Mammary epithelial cell (primary cell): ENCODE measurements at regions of chr1 and their contacts with region 1.

Region 1: DNA sequence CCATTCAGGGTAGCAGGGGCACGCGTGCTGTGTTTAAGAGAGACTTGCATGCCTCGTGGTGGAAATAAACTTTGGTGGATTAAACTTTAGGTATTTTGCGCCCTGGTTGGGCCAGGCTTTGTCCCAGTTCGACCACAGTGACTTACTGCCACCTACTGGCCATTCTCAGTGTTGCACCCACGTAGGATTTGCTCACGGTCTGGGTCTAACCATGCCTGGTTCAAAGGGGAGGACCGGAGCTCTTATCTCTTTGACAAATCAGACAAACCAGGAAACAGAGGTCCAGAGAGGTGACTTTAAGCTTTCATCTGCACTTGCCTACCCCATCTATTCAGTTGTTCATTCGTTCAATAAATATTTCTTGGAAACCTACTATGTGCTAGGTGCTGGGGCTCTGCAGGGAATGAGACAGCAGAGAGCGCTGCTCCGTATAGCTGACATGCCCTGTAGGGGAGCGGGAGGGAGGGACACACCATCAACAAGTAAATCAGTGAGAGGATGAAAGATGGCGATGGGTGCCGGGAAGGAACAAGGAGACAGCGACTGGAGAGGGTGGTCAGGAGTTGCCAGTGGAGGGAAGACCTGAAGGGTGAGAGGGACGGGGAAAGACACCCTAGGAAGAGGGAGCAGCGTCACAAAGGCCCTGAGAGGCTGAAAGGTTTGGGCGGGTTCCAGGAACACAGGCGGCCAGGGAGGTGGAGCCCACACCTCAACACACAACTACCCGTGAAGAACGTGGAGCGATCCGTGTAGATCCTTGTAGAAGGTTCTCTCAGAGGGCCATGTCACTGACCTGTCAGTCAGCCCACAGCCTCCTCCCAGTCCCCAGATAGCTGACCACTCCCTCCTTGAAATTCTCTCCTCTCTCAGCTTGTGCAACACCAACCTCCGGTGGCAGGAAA is 27.2 kb upstream of the TINAGL1 start:
- DNase-seq: peak; percentile 89
- H3K4me3 ChIP-seq: peak overlapping the region; percentile 7 to 47 (median 30)
- H3K27ac ChIP-seq: peak overlapping the region; percentile 23
- H3K4me1 ChIP-seq: peaks cover 19% of the 10 kb centered on the region
- H3K27me3 ChIP-seq: no peaks in the 10 kb centered on the region
- CTCF ChIP-seq: peak; percentile 84

Region 2: DNA sequence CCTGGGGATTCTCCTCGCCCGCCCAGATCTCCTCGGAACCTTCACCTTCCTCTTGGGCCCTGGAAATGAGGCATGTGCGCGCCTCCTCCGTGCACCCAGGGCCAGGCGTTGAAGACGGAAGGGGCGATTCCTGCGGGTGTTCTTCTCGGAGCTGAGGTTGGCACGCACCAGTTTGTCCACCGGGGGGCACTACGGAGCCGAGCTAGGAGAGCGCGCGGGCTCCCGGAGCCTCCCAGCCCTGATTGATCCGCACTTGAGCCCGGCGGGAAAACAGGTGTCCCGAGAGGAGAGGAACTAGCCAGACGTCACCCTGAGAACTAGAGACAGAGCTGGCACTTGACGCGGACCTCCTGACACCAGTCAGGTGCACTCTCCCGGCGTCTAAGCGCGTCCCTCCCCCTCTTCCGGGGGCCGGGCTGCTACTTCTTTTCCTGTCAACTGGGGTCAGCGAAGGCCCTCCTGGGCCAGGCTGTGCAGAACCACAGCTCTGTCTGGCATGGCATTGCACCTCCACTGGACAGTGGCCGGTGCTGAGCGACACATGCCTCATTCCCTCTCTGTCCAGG is 154.4 kb before region 1 on chr1:
- CTCF ChIA-PET with region 1: interaction called, 18 read pairs
- dilution Hi-C with region 1: no loop called
- in situ Hi-C with region 1: loop called in 1 of 2 experiments (anchors 10 kb)
- intact Hi-C with region 1: loop called (anchors 1 kb)
- DNase-seq: peak; percentile 87
- H3K4me3 ChIP-seq: no peak overlapping the region
- H3K27ac ChIP-seq: no peak overlapping the region
- H3K4me1 ChIP-seq: peaks cover 42% of the 10 kb centered on the region
- H3K27me3 ChIP-seq: no peaks in the 10 kb centered on the region
- CTCF ChIP-seq: peak; percentile 83 to 95

Region 3: GRCh38 chr1:31422505-31423319 is 126.4 kb before region 1 on chr1:
- CTCF ChIA-PET with region 1: no interaction called
- dilution Hi-C with region 1: no loop called
- in situ Hi-C with region 1: no loop called
- intact Hi-C with region 1: loop called (anchors 1 kb)
- DNase-seq: peak; percentile 95
- H3K4me3 ChIP-seq: no peak overlapping the region
- H3K27ac ChIP-seq: peak overlapping the region; percentile 85
- H3K4me1 ChIP-seq: peaks cover 86% of the 10 kb centered on the region
- H3K27me3 ChIP-seq: no peaks in the 10 kb centered on the region
- CTCF ChIP-seq: peak; percentile 96 to 98

Region 4: DNA sequence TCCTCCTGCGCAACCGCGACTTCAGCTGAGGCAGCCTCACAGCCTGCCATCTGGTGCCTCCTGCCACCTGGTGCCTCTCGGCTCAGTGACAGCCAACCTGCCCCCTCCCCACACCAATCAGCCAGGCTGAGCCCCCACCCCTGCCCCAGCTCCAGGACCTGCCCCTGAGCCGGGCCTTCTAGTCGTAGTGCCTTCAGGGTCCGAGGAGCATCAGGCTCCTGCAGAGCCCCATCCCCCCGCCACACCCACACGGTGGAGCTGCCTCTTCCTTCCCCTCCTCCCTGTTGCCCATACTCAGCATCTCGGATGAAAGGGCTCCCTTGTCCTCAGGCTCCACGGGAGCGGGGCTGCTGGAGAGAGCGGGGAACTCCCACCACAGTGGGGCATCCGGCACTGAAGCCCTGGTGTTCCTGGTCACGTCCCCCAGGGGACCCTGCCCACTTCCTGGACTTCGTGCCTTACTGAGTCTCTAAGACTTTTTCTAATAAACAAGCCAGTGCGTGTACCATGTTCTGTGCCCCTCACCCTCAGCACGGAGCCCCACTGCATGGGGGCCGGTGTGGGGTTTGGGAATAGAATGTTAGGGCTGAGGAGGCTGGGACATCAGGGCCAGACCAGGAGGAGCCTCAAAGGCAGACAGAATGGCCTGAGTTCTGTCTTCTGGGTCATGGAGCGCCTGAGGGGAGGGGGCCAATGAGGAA is 114.8 kb before region 1 on chr1:
- CTCF ChIA-PET with region 1: no interaction called
- dilution Hi-C with region 1: no loop called
- in situ Hi-C with region 1: loop called in 1 of 2 experiments (anchors 10 kb)
- intact Hi-C with region 1: loop called (anchors 1 kb)
- DNase-seq: no peak
- H3K4me3 ChIP-seq: no peak overlapping the region
- H3K27ac ChIP-seq: no peak overlapping the region
- H3K4me1 ChIP-seq: peaks cover 30% of the 10 kb centered on the region
- H3K27me3 ChIP-seq: no peaks in the 10 kb centered on the region
- CTCF ChIP-seq: no peak

Region 5: DNA sequence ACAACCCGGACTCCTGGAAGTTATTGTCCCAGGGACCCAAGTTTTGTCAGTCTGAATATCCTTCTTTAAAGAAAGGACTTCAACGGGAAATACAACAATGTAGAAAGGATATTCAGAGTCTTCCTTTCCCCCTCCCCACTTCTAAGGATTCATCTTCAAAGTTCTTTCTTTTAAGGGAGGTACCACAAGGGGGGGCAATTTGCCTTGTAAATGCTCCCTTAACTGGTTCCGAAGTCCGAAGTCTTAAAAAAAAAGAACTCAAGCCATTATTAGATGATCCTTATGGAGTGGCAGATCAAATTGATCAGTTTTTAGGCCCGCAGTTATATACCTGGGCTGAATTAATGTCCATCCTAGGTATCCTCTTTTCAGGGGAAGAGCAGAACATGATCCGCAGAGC is 89.1 kb before region 1 on chr1:
- CTCF ChIA-PET with region 1: interaction called, 3 read pairs
- dilution Hi-C with region 1: no loop called
- in situ Hi-C with region 1: no loop called
- intact Hi-C with region 1: loop called (anchors 1 kb)
- DNase-seq: no peak
- H3K4me3 ChIP-seq: no peak overlapping the region
- H3K27ac ChIP-seq: no peak overlapping the region
- H3K4me1 ChIP-seq: no peaks in the 10 kb centered on the region
- H3K27me3 ChIP-seq: no peaks in the 10 kb centered on the region
- CTCF ChIP-seq: peak in 1 of 2 donors; percentile 20

Region 6: DNA sequence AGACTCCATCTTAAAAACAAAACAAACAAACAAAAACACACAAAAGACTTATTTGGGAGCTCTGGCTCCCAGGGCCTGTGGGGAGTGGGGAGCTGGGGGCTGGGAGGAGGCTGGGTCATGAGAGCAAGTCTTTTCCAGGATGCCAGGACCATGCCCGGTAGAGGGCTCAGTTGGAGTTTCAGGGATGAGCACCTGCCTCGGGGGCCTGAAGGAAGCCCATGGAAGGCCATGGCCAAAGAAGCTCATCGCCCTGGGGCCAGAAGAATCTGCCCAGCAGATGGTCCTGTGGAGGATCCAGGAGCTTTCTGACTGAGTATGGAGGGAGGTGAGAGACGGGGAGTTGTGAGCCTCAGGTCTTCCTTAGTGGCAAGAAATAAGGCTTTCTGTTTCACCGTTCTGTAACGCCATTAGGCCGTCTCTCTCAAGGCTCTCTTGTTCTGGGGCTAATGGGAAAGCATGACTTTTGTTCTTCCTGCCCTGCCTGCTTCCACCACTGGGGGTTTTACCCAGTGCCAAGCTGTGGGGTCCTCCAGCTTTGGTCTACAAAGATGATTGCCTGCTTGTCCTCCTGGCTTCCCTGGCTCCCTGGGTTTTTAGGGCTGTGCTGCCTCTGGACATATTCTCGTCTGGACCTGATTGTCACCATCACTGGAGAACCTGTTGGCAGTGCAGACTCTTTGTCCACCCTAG is 47.8 kb before region 1 on chr1:
- CTCF ChIA-PET with region 1: no interaction called
- dilution Hi-C with region 1: loop called (anchors 5 kb)
- in situ Hi-C with region 1: no loop called
- intact Hi-C with region 1: no loop called
- DNase-seq: no peak
- H3K4me3 ChIP-seq: no peak overlapping the region
- H3K27ac ChIP-seq: no peak overlapping the region
- H3K4me1 ChIP-seq: peaks cover 4% of the 10 kb centered on the region
- H3K27me3 ChIP-seq: peaks cover 3% of the 10 kb centered on the region
- CTCF ChIP-seq: peak in 1 of 2 donors; percentile 14

Region 7: DNA sequence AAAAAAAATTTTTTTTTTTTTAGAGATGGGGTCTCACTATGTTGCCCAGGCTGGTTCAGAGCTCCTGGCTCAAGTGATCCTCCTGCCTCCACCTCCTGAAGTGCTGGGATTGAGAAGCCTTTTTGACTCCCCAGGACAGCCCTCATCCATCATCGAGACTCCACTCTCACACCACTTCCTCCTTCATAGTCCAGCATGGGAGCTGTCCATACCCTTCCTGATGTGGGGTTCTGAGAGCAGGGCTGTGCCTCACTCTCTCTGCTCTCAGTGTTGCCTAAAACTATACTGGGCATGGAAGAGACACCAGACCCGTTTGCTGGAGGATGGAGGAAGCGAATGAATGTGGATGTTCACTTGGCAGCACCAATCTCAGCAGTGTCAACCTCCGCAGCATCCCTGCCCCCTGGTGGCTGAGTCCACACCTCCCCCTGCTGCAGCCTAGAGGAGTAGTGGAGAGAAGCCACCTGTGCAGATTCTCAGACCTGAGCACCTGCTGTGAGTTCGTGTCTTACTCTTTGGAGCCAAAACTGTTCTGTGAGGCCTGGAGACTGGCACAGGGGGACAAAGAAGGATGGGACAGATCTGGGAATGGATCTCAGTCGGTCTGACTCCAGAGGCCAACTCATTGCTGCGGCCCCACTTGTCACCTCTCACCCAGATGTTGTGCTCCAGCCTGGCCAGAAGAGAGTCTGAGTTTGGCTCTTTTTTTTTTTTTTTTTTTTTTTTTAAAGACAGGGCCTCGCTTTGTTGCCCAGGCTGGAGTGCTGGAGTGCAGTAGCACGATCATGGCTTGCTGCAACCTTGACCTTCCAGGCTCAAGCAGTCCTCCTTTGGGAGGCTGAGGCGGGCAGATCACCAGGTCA is 44.8 kb after region 1 on chr1:
- CTCF ChIA-PET with region 1: interaction called, 5 read pairs
- dilution Hi-C with region 1: no loop called
- in situ Hi-C with region 1: no loop called
- intact Hi-C with region 1: loop called (anchors 1 kb)
- DNase-seq: peak; percentile 73
- H3K4me3 ChIP-seq: no peak overlapping the region
- H3K27ac ChIP-seq: no peak overlapping the region
- H3K4me1 ChIP-seq: peaks cover 13% of the 10 kb centered on the region
- H3K27me3 ChIP-seq: no peaks in the 10 kb centered on the region
- CTCF ChIP-seq: peak; percentile 96 to 97